ENCODE measurements at regions of chr17 and their contacts with region 1.

Region 1: GRCh38 chr17:47895856-47896671 is at the start of gene SP2:
- DNase-seq: peak; percentile 97
- H3K4me3 ChIP-seq: peak within 1 kb of the TSS; percentile 62 to 83 (median 72)
- H3K27ac ChIP-seq: peak within 1 kb of the TSS; percentile 96 to 100 (median 99)
- H3K4me1 ChIP-seq: peaks cover 10 to 76% (median 45%) of the 10 kb centered on the region in 6 donors
- H3K27me3 ChIP-seq: no peaks in the 10 kb centered on the region
- CTCF ChIP-seq: peak in 6 of 11 experiments; percentile 17 to 78 (median 46)
- POLR2A ChIP-seq: peak in 2 of 3 donors; percentile 21 to 63
- total RNA-seq, gene SP2: 11.9 to 22.6 (median 18.2) TPM

Region 2: DNA sequence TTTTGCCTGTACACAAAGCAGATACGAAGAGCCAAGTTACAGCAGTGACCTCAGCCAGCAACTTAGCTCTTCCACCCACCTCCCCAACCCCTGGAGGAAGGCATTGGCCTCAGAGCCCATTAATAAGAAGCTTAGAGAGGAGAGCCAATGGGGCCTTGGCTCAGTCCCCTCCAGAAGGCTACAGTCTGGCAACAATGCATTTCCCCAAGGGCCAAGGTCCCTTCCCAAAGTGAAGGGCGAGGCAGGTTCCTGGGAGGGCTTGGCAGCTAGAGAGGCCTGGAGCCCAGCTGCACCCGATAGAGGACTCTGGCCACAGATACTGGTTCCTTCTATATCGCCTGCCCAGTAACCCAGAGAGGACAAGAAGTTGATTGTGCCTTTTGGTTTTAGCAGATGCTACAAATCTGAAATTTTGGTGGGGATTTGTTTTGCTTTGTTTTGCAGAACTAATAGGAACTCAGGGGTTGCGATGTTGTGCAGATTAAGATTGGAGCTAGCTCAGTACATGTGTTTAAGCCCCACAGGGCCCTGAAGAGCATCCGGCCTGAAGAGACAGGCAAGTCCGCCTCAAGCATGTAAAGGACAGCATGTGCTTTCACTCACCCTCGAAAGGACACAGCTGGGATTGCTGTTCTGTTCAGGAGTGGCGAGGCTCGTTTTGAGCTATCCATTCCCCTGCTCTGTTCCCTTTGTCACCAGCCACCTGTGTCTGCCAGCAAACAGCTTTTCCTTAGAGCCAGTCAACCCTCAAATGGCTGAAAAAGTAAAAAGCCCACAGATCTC is 33.3 kb after region 1 on chr17:
- intact Hi-C with region 1: no loop called
- DNase-seq: peak; percentile 33
- H3K4me3 ChIP-seq: no peak overlapping the region
- H3K27ac ChIP-seq: no peak overlapping the region
- H3K4me1 ChIP-seq: no peaks in the 10 kb centered on the region
- H3K27me3 ChIP-seq: no peaks in the 10 kb centered on the region
- CTCF ChIP-seq: no peak
- POLR2A ChIP-seq: no peak

Region 3: GRCh38 chr17:47941236-47941994 is 45.4 kb after region 1 on chr17 and contains the start of gene PNPO:
- intact Hi-C with region 1: loop called (anchors 2 kb)
- DNase-seq: peak; percentile 97
- H3K4me3 ChIP-seq: peak within 1 kb of the TSS; percentile 69 to 97 (median 84)
- H3K27ac ChIP-seq: peak within 1 kb of the TSS; percentile 49 to 92 (median 84)
- H3K4me1 ChIP-seq: peaks cover 10 to 64% (median 39%) of the 10 kb centered on the region in 6 donors
- H3K27me3 ChIP-seq: no peaks in the 10 kb centered on the region
- CTCF ChIP-seq: peak in 2 of 11 experiments; percentile 24 to 38
- POLR2A ChIP-seq: peak in 1 of 3 donors; percentile 43
- total RNA-seq, gene PNPO: 23.6 to 28.9 (median 28.1) TPM